ENCODE measurements at regions of chr19 and their contacts with region 1.

Region 1: DNA sequence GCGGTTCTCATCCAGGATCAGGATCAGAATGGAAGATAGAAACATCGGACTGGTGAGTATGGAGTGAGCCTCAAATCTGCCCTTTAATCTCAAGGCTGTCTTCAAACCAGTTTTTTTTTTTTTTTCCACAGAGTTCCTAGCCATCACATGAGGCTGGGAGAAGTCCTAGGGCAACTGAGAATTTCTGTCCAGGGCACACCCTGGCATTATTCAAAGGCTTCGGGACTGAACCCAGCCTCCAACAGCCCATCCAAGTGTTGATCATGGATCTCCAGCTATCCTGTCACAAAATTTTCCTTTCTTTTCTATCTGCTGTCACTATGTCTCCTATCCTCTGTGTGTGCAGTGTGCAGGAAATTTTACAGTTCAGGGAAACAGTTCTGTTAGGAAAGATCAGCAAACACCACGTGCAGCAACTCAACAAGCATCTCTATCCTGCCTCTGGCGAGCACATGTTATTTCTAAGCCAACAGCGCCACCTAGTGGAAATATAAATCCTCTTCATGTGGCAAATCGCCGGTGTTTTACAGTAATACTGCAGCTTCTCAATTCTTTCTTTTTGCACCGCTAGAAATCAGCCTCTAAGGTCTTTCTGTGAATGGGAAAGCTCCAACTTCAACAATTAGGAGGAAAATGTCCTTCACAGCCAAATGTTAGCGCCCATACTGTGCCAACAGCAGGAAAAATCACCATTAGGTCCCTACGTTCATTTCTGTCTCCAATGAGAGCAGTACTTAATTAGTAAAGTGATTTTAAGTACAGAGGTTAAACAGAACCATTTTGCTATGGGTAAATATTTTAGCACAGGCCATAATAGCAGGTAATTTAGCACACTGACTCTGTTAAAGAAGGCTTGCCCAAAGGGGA is 21.4 kb upstream of the ZNF181 start:
- H3K4me3 ChIP-seq: no peak overlapping the region
- H3K27ac ChIP-seq: no peak overlapping the region
- H3K4me1 ChIP-seq: no peaks in the 10 kb centered on the region
- CTCF ChIP-seq: peak; percentile 91

Region 2: GRCh38 chr19:34393629-34394028 is 319.0 kb before region 1 on chr19:
- CTCF ChIA-PET with region 1: no interaction called
- POLR2A ChIA-PET with region 1: no interaction called
- H3K4me3 ChIP-seq: no peak overlapping the region
- H3K27ac ChIP-seq: no peak overlapping the region
- H3K4me1 ChIP-seq: no peaks in the 10 kb centered on the region
- CTCF ChIP-seq: no peak

Region 3: DNA sequence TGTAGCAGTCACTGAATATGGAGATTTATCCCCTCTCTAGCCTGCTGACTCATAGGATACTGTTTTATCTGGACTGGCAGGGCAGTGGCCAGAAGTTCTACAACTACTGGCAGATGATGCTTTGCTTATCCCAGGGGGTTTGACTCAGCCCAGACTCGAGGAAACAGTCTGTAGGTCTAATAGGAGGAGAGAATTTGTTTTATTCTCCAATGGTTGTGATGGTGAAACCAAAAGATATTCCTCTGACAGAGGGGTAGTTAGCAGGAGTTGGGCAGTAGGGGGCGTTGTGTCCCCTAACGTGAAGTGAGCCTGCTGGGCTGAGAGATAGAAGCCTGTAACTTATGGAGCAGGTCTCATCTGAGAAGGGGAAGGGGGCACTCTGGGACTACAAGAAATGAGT is 156.1 kb before region 1 on chr19:
- CTCF ChIA-PET with region 1: interaction called, 17 read pairs
- POLR2A ChIA-PET with region 1: no interaction called
- H3K4me3 ChIP-seq: no peak overlapping the region
- H3K27ac ChIP-seq: no peak overlapping the region
- H3K4me1 ChIP-seq: no peaks in the 10 kb centered on the region
- CTCF ChIP-seq: 0 out of 2 replicates have a peak, but pooled peaks have one; percentile 39

Region 4: DNA sequence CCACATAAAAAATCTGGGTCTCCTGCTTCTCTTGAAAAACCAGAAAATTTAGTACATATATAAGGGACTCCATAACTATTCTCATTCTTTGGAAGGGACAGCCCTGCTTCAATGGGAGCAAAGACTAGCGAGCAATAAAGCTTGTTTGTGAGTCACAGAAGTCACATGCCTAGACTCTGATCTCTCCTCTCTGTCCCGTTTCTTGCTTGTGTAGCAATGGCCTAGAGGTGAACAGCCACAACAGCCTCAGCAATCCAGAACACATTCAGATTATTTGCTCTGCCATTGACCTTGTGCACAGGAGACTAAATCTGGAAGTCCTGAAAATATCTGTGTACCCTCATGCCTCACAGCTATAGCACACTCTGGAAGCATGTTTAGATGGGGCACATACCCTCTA is 78.8 kb before region 1 on chr19:
- CTCF ChIA-PET with region 1: interaction called, 163 read pairs
- POLR2A ChIA-PET with region 1: no interaction called
- H3K4me3 ChIP-seq: no peak overlapping the region
- H3K27ac ChIP-seq: no peak overlapping the region
- H3K4me1 ChIP-seq: no peaks in the 10 kb centered on the region
- CTCF ChIP-seq: no peak

Region 5: DNA sequence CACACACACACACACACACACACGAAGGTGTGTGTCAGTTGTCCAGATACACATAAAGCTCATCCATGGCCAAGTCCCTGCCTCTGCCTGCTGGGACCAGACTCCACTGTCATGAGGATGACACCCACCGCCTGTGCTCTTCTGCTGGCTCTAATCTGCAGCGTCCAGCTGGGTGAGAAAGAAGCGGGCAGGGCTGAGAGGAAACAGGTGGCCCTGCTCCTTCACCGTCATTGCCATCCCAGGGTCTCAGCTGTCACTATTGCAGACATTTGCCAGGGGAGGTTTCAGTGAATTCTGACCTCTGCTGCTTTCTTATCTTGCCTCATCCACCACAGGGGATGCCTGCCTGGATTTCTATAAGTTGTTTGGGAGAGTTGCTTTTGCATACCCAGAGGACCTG is 67.1 kb before region 1 on chr19:
- CTCF ChIA-PET with region 1: interaction called, 163 read pairs
- POLR2A ChIA-PET with region 1: no interaction called
- H3K4me3 ChIP-seq: no peak overlapping the region
- H3K27ac ChIP-seq: no peak overlapping the region
- H3K4me1 ChIP-seq: no peaks in the 10 kb centered on the region
- CTCF ChIP-seq: no peak

Region 6: DNA sequence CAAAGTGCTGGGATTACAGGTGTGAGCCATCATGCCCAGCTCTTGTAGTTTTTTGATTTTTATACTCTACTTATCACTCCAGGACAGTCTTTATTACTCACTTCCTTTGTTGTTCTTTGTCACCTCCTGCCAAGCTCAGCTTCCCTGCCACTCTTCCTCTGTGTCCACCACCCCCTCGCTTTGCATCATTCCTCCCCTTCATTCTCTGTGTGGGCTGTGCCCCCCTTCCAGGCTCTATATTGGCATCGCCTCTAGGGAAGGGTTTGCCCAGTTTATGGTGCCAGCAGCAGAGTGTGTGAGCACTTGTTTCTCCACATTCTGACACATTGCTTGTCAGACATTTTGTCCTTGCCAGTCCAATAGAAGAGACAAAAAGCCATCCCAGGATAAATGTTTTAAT is 20.1 kb before region 1 on chr19:
- CTCF ChIA-PET with region 1: interaction called, 12 read pairs
- POLR2A ChIA-PET with region 1: no interaction called
- H3K4me3 ChIP-seq: no peak overlapping the region
- H3K27ac ChIP-seq: no peak overlapping the region
- H3K4me1 ChIP-seq: peaks cover 3% of the 10 kb centered on the region; the same call in 1 of the 2 replicates
- CTCF ChIP-seq: no peak

Region 7: DNA sequence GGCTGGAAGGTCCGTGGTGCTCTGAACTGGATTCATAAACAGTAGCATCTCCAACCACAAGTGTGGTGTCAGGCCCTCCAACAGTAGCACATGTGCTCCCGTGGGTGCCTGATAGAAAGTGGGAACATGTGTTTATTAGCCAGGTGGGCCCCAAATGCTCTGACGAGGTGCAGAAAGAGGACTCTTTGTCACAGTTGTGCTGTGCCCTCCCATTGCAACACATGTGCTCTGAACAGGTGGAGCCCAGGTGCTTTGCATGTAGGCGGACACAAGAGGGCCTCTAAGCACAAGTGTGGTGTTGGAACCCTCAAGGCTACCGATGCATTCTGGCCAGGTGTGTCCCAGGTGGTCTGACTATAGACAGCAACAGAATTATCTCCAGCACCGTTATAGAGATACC is 138.7 kb after region 1 on chr19:
- CTCF ChIA-PET with region 1: no interaction called
- POLR2A ChIA-PET with region 1: no interaction called
- H3K4me3 ChIP-seq: no peak overlapping the region
- H3K27ac ChIP-seq: no peak overlapping the region
- H3K4me1 ChIP-seq: no peaks in the 10 kb centered on the region
- CTCF ChIP-seq: no peak